ENCODE measurements at regions of chr3 and their contacts with region 1.

Region 1: GRCh38 chr3:50350527-50351322 is at the starts of genes CYB561D2 and NPRL2:
- DNase-seq: peak; percentile 100
- H3K4me3 Mint-ChIP-seq: peak within 1 kb of the TSS; percentile 94
- H3K27ac Mint-ChIP-seq: peak within 1 kb of the TSS; percentile 97
- H3K4me1 Mint-ChIP-seq: peaks cover 62% of the 10 kb centered on the region
- H3K27me3 Mint-ChIP-seq: no peaks in the 10 kb centered on the region
- total RNA-seq, gene CYB561D2: 17.8 to 20.1 TPM
- total RNA-seq, gene NPRL2: 33.2 to 35.8 TPM

Region 2: DNA sequence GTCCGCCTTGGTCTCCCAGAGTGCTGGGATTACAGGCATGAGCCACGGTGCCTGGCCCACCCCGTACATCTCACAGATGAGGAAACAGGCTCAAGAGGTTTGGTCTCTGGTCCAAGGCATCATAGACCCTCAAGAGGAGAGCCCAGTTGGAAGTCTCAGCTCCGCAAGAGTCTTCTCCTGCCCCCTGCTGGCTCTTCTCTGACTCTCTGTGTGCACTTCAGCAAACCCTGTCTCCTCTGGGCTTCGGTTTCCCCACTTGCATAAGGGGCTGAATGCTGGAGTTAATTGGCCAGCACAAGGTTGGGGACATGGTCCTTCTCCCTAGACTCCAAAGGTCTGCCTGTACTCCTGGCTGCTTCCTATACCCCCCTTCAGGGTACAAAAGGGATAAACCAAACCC is 450.9 kb before region 1 on chr3:
- CTCF ChIA-PET with region 1: no interaction called
- POLR2A ChIA-PET with region 1: no interaction called
- intact Hi-C with region 1: no loop called
- DNase-seq: peak; percentile 18
- H3K4me3 Mint-ChIP-seq: no peak overlapping the region
- H3K27ac Mint-ChIP-seq: no peak overlapping the region
- H3K4me1 Mint-ChIP-seq: peaks cover 7% of the 10 kb centered on the region
- H3K27me3 Mint-ChIP-seq: no peaks in the 10 kb centered on the region

Region 3: GRCh38 chr3:50365080-50365841 is 14.5 kb after region 1 on chr3:
- CTCF ChIA-PET with region 1: interaction called, 4 read pairs
- POLR2A ChIA-PET with region 1: interaction called, 6 read pairs
- intact Hi-C with region 1: loop called (anchors 1 kb)
- DNase-seq: peak; percentile 97
- H3K4me3 Mint-ChIP-seq: peak overlapping the region; percentile 75
- H3K27ac Mint-ChIP-seq: peak overlapping the region; percentile 51
- H3K4me1 Mint-ChIP-seq: peaks cover 20% of the 10 kb centered on the region
- H3K27me3 Mint-ChIP-seq: no peaks in the 10 kb centered on the region

Region 4: DNA sequence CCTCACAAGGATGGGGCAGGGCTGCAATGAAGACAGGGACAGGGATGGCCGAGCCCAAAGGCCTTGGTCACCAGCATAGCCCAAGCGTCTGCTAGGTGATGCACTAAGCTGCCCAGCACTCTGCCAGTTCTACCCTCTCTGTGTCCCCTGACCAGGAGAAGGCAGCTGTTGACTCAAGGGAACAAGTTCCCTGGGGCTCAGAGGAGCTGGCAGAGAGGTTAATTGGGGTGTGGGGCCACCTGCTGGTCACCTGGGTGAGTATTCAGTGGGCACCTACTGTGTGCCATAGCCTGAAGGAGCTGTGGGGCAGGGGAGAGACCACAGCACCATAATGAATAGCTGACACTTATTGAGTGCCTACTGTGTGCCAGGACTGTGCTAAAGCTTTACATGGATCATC is 302.0 kb after region 1 on chr3:
- CTCF ChIA-PET with region 1: no interaction called
- POLR2A ChIA-PET with region 1: no interaction called
- intact Hi-C with region 1: no loop called
- DNase-seq: peak; percentile 77
- H3K4me3 Mint-ChIP-seq: no peak overlapping the region
- H3K27ac Mint-ChIP-seq: peak overlapping the region; percentile 19
- H3K4me1 Mint-ChIP-seq: peaks cover 28% of the 10 kb centered on the region
- H3K27me3 Mint-ChIP-seq: no peaks in the 10 kb centered on the region

Measured in activated CD4-positive, alpha-beta memory T cell treated with anti-CD3 and anti-CD28 coated beads for 36 hours (primary cell).